Activated CD4-positive, alpha-beta T cell treated with anti-CD3 and anti-CD28 coated beads for 36 hours (primary cell): ENCODE measurements at regions of chr5 and their contacts with region 1.

Region 1: DNA sequence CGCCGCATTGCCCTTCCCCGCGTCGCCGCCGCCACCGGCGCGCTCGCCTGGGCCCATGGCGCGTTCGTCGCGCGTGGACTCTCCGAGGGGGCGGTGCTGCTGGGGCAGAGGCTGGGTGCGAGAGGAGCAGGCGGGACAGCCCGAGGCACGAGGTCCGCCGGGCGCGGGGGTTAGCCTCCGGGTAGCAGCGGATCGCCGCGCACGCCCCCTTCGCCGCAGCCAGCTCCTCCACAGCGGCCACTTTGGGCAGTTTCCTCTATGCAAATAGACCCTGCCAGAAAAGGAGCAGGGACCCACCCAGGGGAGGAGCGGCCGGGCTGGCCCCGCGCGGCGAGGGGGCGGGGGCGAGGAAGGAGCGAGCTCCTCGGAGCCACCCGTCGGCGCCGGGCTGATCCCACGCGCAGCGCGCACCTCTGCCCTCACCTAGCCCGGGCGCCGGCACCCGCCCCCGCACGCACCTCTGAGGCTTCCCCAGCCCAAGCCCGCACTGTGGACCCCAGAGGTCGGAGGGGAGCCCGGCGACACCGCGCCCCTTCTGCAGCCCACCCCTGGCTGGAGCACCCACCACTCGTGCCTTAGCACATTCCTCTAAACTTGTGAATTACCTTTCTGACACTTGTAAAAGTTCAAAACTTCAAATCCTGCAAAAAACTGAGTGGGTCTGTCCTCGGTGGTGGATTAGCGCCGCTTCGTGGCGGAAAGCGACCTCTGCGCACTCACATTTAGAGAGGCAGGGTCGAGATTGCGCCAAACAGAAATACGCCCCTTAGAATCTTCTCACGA is at the start of gene COL23A1:
- DNase-seq: peak; percentile 63
- ATAC-seq: peak; percentile 59
- H3K4me3 Mint-ChIP-seq: peak within 1 kb of the TSS; percentile 58
- H3K27ac Mint-ChIP-seq: no peak within 1 kb of the TSS
- H3K4me1 Mint-ChIP-seq: peaks cover 5% of the 10 kb centered on the region
- H3K27me3 Mint-ChIP-seq: peaks cover 46% of the 10 kb centered on the region
- total RNA-seq, gene COL23A1: not detected

Region 2: GRCh38 chr5:178232124-178232919 is 358.0 kb before region 1 on chr5 and contains the start of gene PHYKPL:
- CTCF ChIA-PET with region 1: no interaction called
- POLR2A ChIA-PET with region 1: no interaction called
- intact Hi-C with region 1: loop called in 1 of 2 experiments (anchors 1 kb)
- DNase-seq: peak; percentile 81
- ATAC-seq: peak; percentile 70
- H3K4me3 Mint-ChIP-seq: peak within 1 kb of the TSS; percentile 80
- H3K27ac Mint-ChIP-seq: peak within 1 kb of the TSS; percentile 84
- H3K4me1 Mint-ChIP-seq: peaks cover 56% of the 10 kb centered on the region
- H3K27me3 Mint-ChIP-seq: no peaks in the 10 kb centered on the region
- total RNA-seq, gene PHYKPL: 67.2 to 68.4 TPM

Region 3: GRCh38 chr5:178279725-178280438 is 310.4 kb before region 1 on chr5:
- CTCF ChIA-PET with region 1: interaction called, 3 read pairs
- POLR2A ChIA-PET with region 1: no interaction called
- intact Hi-C with region 1: loop called (anchors 1 to 5 kb)
- DNase-seq: peak; percentile 82
- ATAC-seq: peak; percentile 53
- H3K4me3 Mint-ChIP-seq: no peak overlapping the region
- H3K27ac Mint-ChIP-seq: no peak overlapping the region
- H3K4me1 Mint-ChIP-seq: peaks cover 3% of the 10 kb centered on the region
- H3K27me3 Mint-ChIP-seq: peaks cover 8% of the 10 kb centered on the region

Region 4: DNA sequence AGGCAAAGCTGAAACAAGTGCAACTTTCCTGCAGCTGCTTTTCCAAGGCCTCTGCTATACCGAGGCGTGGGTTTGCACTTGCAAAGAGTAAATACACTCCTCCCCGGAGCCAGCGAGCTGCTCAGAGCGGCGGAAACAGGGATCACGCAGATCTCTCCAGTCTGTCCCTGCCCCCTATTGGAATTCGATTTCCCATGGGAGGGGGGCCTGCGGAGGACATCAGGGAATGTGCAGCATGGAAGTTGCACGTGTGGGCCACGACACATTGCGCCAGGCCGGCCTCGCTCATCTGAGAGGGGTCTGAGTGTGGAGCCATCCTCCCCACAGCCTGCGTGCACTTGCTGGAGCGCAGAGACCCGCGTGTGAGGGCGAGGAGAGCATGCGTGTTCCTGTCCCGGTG is 253.4 kb before region 1 on chr5:
- CTCF ChIA-PET with region 1: no interaction called
- POLR2A ChIA-PET with region 1: no interaction called
- intact Hi-C with region 1: no loop called
- DNase-seq: no peak
- ATAC-seq: no peak
- H3K4me3 Mint-ChIP-seq: no peak overlapping the region
- H3K27ac Mint-ChIP-seq: no peak overlapping the region
- H3K4me1 Mint-ChIP-seq: no peaks in the 10 kb centered on the region
- H3K27me3 Mint-ChIP-seq: no peaks in the 10 kb centered on the region

Region 5: GRCh38 chr5:178461004-178461730 is 129.2 kb before region 1 on chr5:
- CTCF ChIA-PET with region 1: no interaction called
- POLR2A ChIA-PET with region 1: no interaction called
- intact Hi-C with region 1: loop called in 1 of 2 experiments (anchors 2 kb)
- DNase-seq: peak; percentile 76
- ATAC-seq: peak; percentile 81
- H3K4me3 Mint-ChIP-seq: no peak overlapping the region
- H3K27ac Mint-ChIP-seq: no peak overlapping the region
- H3K4me1 Mint-ChIP-seq: no peaks in the 10 kb centered on the region
- H3K27me3 Mint-ChIP-seq: no peaks in the 10 kb centered on the region